ENCODE measurements at regions of chr9 and their contacts with region 1.

Region 1: DNA sequence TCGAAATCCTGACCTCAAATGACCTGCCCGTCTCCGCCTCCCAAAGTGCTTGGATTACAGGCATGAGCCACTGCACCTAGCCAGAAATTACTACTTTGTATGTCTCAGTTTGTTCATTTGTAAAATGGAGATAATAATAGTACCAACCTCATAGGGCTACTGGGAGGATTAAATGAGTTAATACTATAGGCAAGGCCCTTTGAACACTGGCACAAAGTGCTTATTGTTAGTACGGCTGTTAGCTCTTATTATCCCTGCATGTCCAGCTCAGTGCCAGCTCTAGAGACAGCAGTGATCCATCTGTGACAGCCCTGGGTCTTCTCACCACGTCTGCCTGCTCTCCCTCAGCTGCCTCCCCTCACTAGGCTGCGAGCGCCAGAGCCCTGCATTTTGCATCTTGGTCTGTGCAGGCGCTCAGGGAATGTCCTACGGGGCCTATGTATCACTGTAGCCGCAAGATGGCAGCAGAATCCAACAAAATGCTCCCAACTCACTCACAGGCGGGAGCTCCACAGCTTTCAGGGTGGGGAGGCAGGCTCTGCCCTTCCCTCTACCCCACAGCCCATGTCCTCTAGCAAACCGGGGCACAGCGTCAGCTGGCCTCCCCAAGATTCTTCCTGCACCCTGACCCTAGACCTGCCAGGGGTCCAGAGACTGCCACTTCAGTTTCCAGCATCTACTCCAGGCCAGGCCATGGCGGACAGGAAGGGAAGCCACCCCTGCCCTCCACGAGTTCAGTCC is 17.7 kb upstream of the AKNA start:
- DNase-seq: peak; percentile 88
- ATAC-seq: peak; percentile 98
- H3K4me3 Mint-ChIP-seq: no peak overlapping the region
- H3K27ac Mint-ChIP-seq: no peak overlapping the region
- H3K4me1 Mint-ChIP-seq: peaks cover 2% of the 10 kb centered on the region
- H3K27me3 Mint-ChIP-seq: no peaks in the 10 kb centered on the region
- CTCF ChIP-seq: peak; percentile 87

Region 2: GRCh38 chr9:114356792-114357191 is 48.7 kb before region 1 on chr9:
- CTCF ChIA-PET with region 1: no interaction called
- POLR2A ChIA-PET with region 1: no interaction called
- intact Hi-C with region 1: no loop called
- DNase-seq: no peak
- ATAC-seq: no peak
- H3K4me3 Mint-ChIP-seq: no peak overlapping the region
- H3K27ac Mint-ChIP-seq: peak overlapping the region; percentile 67
- H3K4me1 Mint-ChIP-seq: peaks cover 55% of the 10 kb centered on the region
- H3K27me3 Mint-ChIP-seq: no peaks in the 10 kb centered on the region
- CTCF ChIP-seq: no peak

Region 3: GRCh38 chr9:114385412-114386181 is 19.9 kb before region 1 on chr9:
- CTCF ChIA-PET with region 1: interaction called, 14 read pairs
- POLR2A ChIA-PET with region 1: interaction called, 15 read pairs
- intact Hi-C with region 1: no loop called
- DNase-seq: peak; percentile 96
- ATAC-seq: peak; percentile 74
- H3K4me3 Mint-ChIP-seq: peak overlapping the region; percentile 84
- H3K27ac Mint-ChIP-seq: peak overlapping the region; percentile 94
- H3K4me1 Mint-ChIP-seq: peaks cover 34% of the 10 kb centered on the region
- H3K27me3 Mint-ChIP-seq: no peaks in the 10 kb centered on the region
- CTCF ChIP-seq: no peak

Region 4: GRCh38 chr9:114434878-114435311 is 29.4 kb after region 1 on chr9:
- CTCF ChIA-PET with region 1: interaction called, 14 read pairs
- POLR2A ChIA-PET with region 1: no interaction called
- intact Hi-C with region 1: no loop called
- DNase-seq: no peak
- ATAC-seq: peak; percentile 55
- H3K4me3 Mint-ChIP-seq: no peak overlapping the region
- H3K27ac Mint-ChIP-seq: no peak overlapping the region
- H3K4me1 Mint-ChIP-seq: peaks cover 4% of the 10 kb centered on the region
- H3K27me3 Mint-ChIP-seq: no peaks in the 10 kb centered on the region
- CTCF ChIP-seq: no peak

Region 5: GRCh38 chr9:114487607-114488300 is 82.3 kb after region 1 on chr9:
- CTCF ChIA-PET with region 1: interaction called, 23 read pairs
- POLR2A ChIA-PET with region 1: no interaction called
- intact Hi-C with region 1: no loop called
- DNase-seq: peak; percentile 73
- ATAC-seq: peak; percentile 78
- H3K4me3 Mint-ChIP-seq: no peak overlapping the region
- H3K27ac Mint-ChIP-seq: peak overlapping the region; percentile 9
- H3K4me1 Mint-ChIP-seq: peaks cover 27% of the 10 kb centered on the region
- H3K27me3 Mint-ChIP-seq: no peaks in the 10 kb centered on the region
- CTCF ChIP-seq: peak; percentile 87

Region 6: GRCh38 chr9:114587385-114588202 is 182.1 kb after region 1 on chr9 and contains the start of gene ATP6V1G1:
- CTCF ChIA-PET with region 1: interaction called, 16 read pairs
- POLR2A ChIA-PET with region 1: interaction called, 3 read pairs
- intact Hi-C with region 1: no loop called
- DNase-seq: peak; percentile 100
- ATAC-seq: peak; percentile 96
- H3K4me3 Mint-ChIP-seq: peak within 1 kb of the TSS; percentile 94
- H3K27ac Mint-ChIP-seq: peak within 1 kb of the TSS; percentile 99
- H3K4me1 Mint-ChIP-seq: peaks cover 37% of the 10 kb centered on the region
- H3K27me3 Mint-ChIP-seq: no peaks in the 10 kb centered on the region
- CTCF ChIP-seq: no peak
- total RNA-seq, gene ATP6V1G1: 34.1 to 34.7 TPM

Region 7: DNA sequence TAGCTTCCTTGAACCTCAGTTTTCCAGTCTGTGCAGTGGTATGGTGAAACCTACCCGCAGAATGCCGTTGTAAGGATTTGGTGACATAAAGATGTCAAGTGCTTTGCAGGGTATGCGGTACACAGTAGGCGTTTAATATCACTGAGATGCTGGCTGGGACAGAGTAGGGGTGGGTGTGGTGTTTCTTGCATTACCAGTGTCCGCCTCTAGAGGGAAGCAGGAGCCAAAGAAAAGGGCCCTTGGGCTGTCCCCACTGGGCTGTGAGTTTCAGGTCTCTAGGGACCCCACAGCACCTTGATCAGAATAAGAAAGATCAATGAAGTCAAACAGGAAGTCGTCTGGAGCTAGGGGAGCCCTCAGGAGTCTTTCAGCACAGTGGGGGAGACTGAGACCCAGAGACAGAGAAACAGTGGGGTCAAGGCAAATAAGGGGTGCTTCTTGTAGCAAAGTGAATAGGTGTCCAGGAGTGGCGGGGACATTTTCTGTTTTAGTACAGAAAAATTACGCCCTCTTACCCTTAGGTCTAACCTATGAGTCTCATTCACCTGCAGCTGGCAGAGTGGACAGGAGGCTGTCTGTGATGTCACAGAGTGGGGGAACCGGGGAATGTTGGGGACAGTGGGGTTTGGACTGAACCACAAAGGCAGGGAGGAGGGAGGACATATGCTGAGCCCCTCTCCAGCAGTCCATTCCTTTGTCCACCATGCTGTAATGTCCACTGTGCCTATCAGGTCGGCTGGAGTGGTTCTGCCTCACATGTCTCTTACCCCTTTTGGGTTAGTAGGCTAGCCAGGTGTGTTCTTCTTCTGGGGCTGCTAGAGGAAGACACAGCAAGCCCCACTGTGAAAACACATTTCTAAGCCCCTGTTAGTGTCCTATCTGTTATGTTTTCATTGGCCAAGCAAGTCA is 256.9 kb after region 1 on chr9:
- CTCF ChIA-PET with region 1: interaction called, 16 read pairs
- POLR2A ChIA-PET with region 1: no interaction called
- intact Hi-C with region 1: no loop called
- DNase-seq: peak; percentile 79
- ATAC-seq: peak; percentile 97
- H3K4me3 Mint-ChIP-seq: no peak overlapping the region
- H3K27ac Mint-ChIP-seq: no peak overlapping the region
- H3K4me1 Mint-ChIP-seq: peaks cover 19% of the 10 kb centered on the region
- H3K27me3 Mint-ChIP-seq: peaks cover 6% of the 10 kb centered on the region
- CTCF ChIP-seq: peak; percentile 94